Sigmoid colon (tissue), 7 donors: ENCODE measurements at regions of chr7 and their contacts with region 1.

Region 1: GRCh38 chr7:100705753-100706671 is at the start of gene POP7:
- DNase-seq: peak; percentile 100
- H3K4me3 ChIP-seq: peak within 1 kb of the TSS; percentile 64 to 72 (median 68)
- H3K27ac ChIP-seq: peak within 1 kb of the TSS; percentile 81 to 98 (median 96)
- H3K4me1 ChIP-seq: peaks cover 0 to 26% (median 22%) of the 10 kb centered on the region in 4 donors
- H3K27me3 ChIP-seq: no peaks in the 10 kb centered on the region
- CTCF ChIP-seq: no peak
- EP300 ChIP-seq: peak in 1 of 4 donors; percentile 72
- POLR2A ChIP-seq: peak; percentile 37 to 56
- total RNA-seq, gene POP7: 20.5 to 39.5 (median 31.7) TPM

Region 2: DNA sequence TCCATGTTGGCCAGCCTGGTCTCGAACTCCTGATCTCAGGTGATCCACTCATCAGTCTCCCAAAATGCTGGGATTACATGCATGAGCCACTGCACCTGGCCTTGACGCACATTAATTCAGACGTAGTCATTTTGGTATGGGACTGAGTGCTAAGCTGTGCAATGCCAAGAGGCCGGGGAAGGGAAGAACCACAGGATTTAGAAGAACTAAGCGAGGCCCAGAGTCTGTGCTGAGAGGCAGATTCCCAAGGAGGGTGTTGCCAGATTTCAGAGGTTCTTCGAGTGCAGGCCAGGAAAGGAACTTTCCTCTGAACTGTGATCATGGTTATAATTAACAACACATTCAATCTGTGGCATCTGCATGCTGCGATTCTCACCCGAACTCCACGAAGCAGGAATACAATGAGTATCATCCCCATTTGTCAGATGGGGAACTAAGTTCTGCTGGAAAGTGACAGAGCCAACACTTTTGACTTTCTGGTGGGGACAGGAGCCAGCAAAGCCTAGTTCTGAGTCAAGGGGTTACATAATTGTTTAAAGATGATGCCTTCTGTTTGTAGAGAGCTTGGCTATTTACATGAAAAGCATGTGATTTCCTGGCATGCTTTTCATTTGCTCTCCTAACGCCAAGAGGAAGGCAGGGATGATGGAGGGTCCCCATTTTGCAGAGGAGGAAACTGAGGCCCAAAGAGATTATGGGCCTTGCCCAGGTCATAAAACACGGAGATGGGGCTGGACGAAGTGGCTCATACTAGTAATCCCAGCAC is 21.2 kb after region 1 on chr7:
- intact Hi-C with region 1: loop called (anchors 1 kb)
- DNase-seq: peak; percentile 79
- H3K4me3 ChIP-seq: no peak overlapping the region
- H3K27ac ChIP-seq: peak overlapping the region in 1 of 4 donors; percentile 21
- H3K4me1 ChIP-seq: peaks cover 0 to 13% (median 3%) of the 10 kb centered on the region in 4 donors
- H3K27me3 ChIP-seq: peaks cover 4 to 20% (median 4%) of the 10 kb centered on the region in 3 donors
- CTCF ChIP-seq: no peak
- EP300 ChIP-seq: no peak
- POLR2A ChIP-seq: no peak

Region 3: DNA sequence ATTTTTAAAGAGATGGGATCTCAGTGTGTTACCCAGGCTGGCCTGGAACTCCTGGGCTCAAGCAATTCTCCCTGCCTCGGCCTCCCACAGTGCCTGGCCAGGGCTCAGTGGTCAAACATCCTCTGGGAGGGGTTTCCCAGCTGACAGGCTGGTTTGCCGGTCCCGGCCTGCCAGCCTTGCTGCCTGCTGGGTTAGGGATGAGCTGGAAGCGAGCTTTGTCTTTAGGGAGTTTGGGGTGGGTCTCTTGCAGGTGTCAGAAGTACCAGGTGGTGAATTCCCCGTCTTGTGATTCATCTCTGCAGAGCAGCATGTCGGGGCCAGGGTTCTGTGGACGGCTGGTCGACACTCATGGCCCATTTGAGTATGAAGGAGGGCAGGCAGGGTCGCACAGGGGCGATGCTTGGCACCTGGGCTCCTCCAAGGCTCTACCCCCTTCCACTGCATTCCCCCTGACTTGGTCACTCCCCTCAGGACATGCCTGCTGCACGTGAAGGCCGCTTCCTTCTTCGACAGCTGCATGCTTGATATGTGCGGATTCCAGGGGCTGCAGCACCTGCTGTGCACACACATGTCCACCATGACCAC is 57.6 kb after region 1 on chr7:
- intact Hi-C with region 1: no loop called
- DNase-seq: no peak
- H3K4me3 ChIP-seq: no peak overlapping the region
- H3K27ac ChIP-seq: no peak overlapping the region
- H3K4me1 ChIP-seq: no peaks in the 10 kb centered on the region
- H3K27me3 ChIP-seq: peaks cover 0 to 5% (median 0%) of the 10 kb centered on the region in 3 donors
- CTCF ChIP-seq: no peak
- EP300 ChIP-seq: no peak
- POLR2A ChIP-seq: no peak

Region 4: GRCh38 chr7:100867040-100867775 is 161.2 kb after region 1 on chr7 and contains the start of gene TRIP6:
- intact Hi-C with region 1: loop called (anchors 5 kb)
- DNase-seq: peak; percentile 96
- H3K4me3 ChIP-seq: peak within 1 kb of the TSS; percentile 73 to 89 (median 82)
- H3K27ac ChIP-seq: peak within 1 kb of the TSS; percentile 95 to 97 (median 96)
- H3K4me1 ChIP-seq: peaks cover 0 to 38% (median 34%) of the 10 kb centered on the region in 4 donors
- H3K27me3 ChIP-seq: no peaks in the 10 kb centered on the region
- CTCF ChIP-seq: no peak
- EP300 ChIP-seq: peak in 1 of 4 donors; percentile 59
- POLR2A ChIP-seq: peak in 1 of 2 donors; percentile 24
- total RNA-seq, gene TRIP6: 37.8 to 79.7 (median 51.1) TPM